ENCODE measurements at regions of chr15 and their contacts with region 1.

Region 1: DNA sequence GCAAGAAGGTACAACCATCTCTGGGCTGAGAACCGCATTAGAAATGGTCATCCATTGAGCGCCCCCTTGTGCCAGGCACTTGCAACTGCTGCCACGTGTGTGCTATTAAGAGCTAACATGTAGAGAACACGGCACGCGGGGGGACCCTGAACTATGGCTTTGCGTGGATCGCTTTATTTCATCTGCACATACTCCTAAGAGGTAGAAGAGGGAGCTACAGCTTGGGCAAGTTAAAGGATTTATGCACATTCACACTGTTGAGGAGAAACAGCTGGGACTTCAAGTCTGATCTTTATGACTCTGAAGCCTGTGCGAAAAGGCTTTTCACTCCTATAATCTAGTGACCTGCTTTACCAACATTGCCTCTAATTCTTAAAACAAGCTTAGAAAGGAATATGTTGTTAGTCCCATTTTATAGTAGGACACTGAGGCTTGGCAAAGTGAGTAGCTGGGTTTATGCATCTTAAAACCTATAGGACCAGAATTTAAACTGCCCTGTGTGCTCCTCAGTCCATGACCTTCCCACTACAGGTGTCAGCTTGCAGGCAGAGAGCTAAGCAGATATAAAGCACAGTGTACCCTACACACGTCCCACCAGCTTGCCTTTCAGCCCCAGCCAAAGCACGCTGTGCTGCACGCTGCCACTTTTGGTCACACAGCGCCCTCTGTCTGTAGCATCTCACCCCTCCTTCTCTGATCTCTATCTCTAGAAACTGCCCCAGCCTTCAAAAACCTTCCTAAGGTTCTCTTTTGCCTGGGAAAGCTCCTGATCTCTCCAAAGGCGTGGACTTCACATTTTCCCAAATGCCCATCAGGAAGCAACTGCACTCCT is 57.8 kb downstream of the STARD5 start:
- DNase-seq: peak; percentile 66 to 91 (median 83)
- H3K4me3 ChIP-seq: no peak overlapping the region
- H3K27ac ChIP-seq: no peak overlapping the region
- H3K4me1 ChIP-seq: peaks cover 0 to 3% of the 10 kb centered on the region in 2 donors
- H3K27me3 ChIP-seq: no peaks in the 10 kb centered on the region
- CTCF ChIP-seq: peak; percentile 74 to 90 (median 80)
- POLR2A ChIP-seq: no peak

Region 2: DNA sequence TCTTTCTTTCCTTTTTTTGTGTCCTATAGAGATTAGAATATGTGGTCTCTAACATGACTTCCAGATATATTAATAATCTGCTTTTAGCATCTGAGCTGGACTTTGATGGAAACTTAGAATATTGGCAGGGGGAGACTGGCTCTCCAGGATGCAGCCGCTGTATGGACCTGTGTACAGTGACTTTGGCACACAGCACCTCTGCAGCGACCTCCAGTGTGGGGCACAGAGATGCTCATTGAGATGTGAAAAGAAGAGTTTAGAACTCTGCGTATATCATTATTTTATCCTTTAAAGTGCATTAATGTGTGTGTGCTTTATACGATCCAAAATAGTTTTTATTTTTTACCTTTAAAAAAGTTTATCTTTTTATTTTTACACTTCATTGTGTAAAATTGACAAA is 113.8 kb before region 1 on chr15:
- intact Hi-C with region 1: loop called in 1 of 2 experiments (anchors 5 kb)
- DNase-seq: no peak
- H3K4me3 ChIP-seq: no peak overlapping the region
- H3K27ac ChIP-seq: no peak overlapping the region
- H3K4me1 ChIP-seq: no peaks in the 10 kb centered on the region
- H3K27me3 ChIP-seq: no peaks in the 10 kb centered on the region
- CTCF ChIP-seq: no peak
- POLR2A ChIP-seq: no peak